Right cardiac atrium (tissue), 5 donors: ENCODE measurements at regions of chr7 and their contacts with region 1.

Region 1: DNA sequence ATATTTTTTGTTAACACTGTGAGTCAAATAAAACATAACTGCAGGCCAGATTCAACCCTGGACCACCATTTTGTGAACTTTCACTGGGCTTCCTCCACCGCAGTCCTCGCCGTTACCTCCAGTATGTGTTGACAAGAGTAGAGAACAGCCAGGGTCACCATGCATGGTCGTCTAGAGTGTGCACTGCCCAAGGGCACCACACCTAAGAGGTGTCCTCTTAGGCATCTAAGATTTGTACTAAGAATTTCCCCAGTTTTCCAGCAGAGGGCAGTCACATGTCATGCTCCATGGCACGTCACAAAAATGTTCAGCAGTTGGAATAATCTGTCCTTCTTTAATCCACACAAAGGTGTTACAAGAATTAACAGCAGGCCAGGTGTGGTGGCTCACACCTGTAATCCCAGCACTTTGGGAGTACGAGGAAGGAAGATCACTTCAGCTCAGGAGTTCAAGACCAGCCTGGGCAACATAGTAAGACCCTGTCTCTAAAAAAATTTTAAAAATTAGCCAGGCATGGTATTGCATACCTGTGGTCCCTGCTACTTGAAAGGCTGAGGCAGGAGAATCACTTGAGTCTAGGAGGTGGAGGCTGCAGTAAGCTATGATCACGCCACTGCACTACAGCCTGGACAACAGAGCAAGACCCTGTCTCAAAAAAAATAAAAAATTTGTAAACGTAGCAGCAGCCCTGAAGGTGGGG is 71.2 kb upstream of the FOXK1 start:
- DNase-seq: peak in 2 of 3 donors; percentile 19 to 55
- ATAC-seq: peak; percentile 54 to 75
- H3K4me3 ChIP-seq: no peak overlapping the region
- H3K27ac ChIP-seq: no peak overlapping the region
- H3K4me1 ChIP-seq: no peaks in the 10 kb centered on the region
- H3K27me3 ChIP-seq: no peaks in the 10 kb centered on the region

Region 2: GRCh38 chr7:5083311-5083711 is 472.4 kb after region 1 on chr7:
- intact Hi-C with region 1: loop called in 1 of 4 experiments (anchors 10 kb)
- DNase-seq: no peak
- ATAC-seq: no peak
- H3K4me3 ChIP-seq: no peak overlapping the region
- H3K27ac ChIP-seq: no peak overlapping the region
- H3K4me1 ChIP-seq: no peaks in the 10 kb centered on the region
- H3K27me3 ChIP-seq: no peaks in the 10 kb centered on the region